Aorta (tissue), 5 donors: ENCODE measurements at regions of chr10 and their contacts with region 1.

Region 1: GRCh38 chr10:112177247-112177646 is 6.3 kb downstream of the GPAM start:
- DNase-seq: no peak
- ATAC-seq: no peak
- H3K4me3 ChIP-seq: no peak overlapping the region
- H3K27ac ChIP-seq: no peak overlapping the region
- H3K4me1 ChIP-seq: peaks cover 0 to 2% of the 10 kb centered on the region in 2 donors
- H3K27me3 ChIP-seq: no peaks in the 10 kb centered on the region

Region 2: DNA sequence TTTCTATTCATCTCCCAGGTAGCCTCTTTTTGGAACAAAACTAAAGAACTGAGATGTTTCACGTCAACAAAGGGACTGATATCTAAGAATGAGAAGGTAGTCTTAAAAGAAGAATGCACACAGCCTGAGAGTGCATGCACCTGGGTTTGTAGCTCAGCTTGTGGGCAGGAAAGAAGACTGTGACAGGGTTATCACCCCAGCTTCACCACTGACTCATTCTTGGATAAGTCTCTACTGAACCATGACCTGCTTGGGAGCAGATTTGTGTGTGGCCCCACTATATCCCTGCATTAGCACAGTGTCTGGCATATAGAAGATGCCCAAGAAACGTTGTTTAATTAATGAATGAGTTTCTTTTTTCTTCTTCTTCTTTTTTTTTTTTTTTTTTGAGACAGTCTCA is 181.1 kb before region 1 on chr10:
- intact Hi-C with region 1: no loop called
- DNase-seq: no peak
- ATAC-seq: no peak
- H3K4me3 ChIP-seq: no peak overlapping the region
- H3K27ac ChIP-seq: no peak overlapping the region
- H3K4me1 ChIP-seq: no peaks in the 10 kb centered on the region
- H3K27me3 ChIP-seq: no peaks in the 10 kb centered on the region

Region 3: GRCh38 chr10:112295853-112296830 is 118.9 kb after region 1 on chr10:
- intact Hi-C with region 1: no loop called
- DNase-seq: no peak
- ATAC-seq: peak; percentile 68
- H3K4me3 ChIP-seq: no peak overlapping the region
- H3K27ac ChIP-seq: peak overlapping the region in 1 of 2 donors; percentile 28
- H3K4me1 ChIP-seq: peaks cover 3 to 4% of the 10 kb centered on the region in 2 donors
- H3K27me3 ChIP-seq: no peaks in the 10 kb centered on the region

Region 4: GRCh38 chr10:112434988-112435619 is 257.9 kb after region 1 on chr10:
- intact Hi-C with region 1: loop called in 1 of 2 experiments (anchors 10 kb)
- DNase-seq: no peak
- ATAC-seq: no peak
- H3K4me3 ChIP-seq: no peak overlapping the region
- H3K27ac ChIP-seq: no peak overlapping the region
- H3K4me1 ChIP-seq: no peaks in the 10 kb centered on the region
- H3K27me3 ChIP-seq: no peaks in the 10 kb centered on the region